ENCODE measurements at regions of chr12 and their contacts with region 1.

Region 1: GRCh38 chr12:120428597-120429229 is 9.2 kb upstream of the COX6A1 start:
- DNase-seq: no peak
- ATAC-seq: no peak
- H3K4me3 Mint-ChIP-seq: no peak overlapping the region
- H3K27ac Mint-ChIP-seq: no peak overlapping the region
- H3K4me1 Mint-ChIP-seq: peaks cover 12% of the 10 kb centered on the region
- H3K27me3 Mint-ChIP-seq: peaks cover 10% of the 10 kb centered on the region

Region 2: GRCh38 chr12:120356567-120357030 is 72.1 kb before region 1 on chr12:
- CTCF ChIA-PET with region 1: interaction called, 29 read pairs
- DNase-seq: peak; percentile 79
- ATAC-seq: peak; percentile 93
- H3K4me3 Mint-ChIP-seq: no peak overlapping the region
- H3K27ac Mint-ChIP-seq: no peak overlapping the region
- H3K4me1 Mint-ChIP-seq: no peaks in the 10 kb centered on the region
- H3K27me3 Mint-ChIP-seq: peaks cover 22% of the 10 kb centered on the region